Activated CD4-positive, alpha-beta memory T cell treated with anti-CD3 and anti-CD28 coated beads for 36 hours (primary cell): ENCODE measurements at regions of chr2 and their contacts with region 1.

Region 1: DNA sequence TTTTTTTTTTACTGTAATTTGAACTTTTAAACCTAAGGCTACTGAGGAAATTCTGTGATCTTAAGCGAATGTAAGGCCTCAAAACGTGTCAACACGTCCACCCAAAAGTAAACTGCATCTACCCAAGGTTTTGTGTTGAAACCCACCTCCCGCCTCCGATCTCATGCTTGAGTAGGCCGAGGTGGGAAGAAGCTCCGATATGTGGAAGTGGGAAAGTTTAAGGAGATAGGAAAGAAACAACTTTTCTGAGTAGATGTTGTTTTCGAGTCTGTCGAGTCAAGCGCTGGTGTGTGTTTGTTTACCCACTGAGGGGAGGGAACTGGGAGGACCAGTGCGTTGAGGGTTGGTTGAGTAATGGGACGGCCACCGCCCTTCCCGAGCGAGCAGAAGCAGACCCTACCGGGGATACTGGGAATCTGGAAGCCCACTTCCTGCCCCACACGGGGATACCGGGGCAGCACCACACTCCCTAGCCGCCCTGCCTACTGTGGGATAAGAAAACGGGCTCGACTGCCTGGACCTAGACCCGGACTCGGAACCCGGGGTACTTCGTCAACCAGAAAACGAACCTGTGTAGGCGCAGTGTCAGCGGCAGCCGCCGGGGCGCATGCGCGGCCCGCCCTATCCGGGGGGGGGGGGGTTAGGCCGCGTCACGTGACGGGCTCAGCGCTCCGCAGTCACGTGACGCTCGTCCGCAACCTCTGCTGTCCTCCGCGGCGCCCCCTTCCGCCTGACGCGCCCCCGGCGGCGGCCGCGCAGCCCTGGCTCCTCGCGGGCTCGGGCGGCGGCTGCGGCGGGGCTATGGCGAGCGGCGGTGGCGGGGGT is at the start of gene RETREG2:
- DNase-seq: peak; percentile 86
- H3K4me3 Mint-ChIP-seq: peak within 1 kb of the TSS; percentile 95
- H3K27ac Mint-ChIP-seq: peak within 1 kb of the TSS; percentile 99
- H3K4me1 Mint-ChIP-seq: peaks cover 52% of the 10 kb centered on the region
- H3K27me3 Mint-ChIP-seq: no peaks in the 10 kb centered on the region
- total RNA-seq, gene RETREG2: 60.3 to 67.9 TPM

Region 2: GRCh38 chr2:218286570-218287459 is 890.9 kb before region 1 on chr2:
- CTCF ChIA-PET with region 1: no interaction called
- POLR2A ChIA-PET with region 1: no interaction called
- intact Hi-C with region 1: loop called (anchors 10 kb)
- DNase-seq: peak; percentile 92
- H3K4me3 Mint-ChIP-seq: peak overlapping the region; percentile 82
- H3K27ac Mint-ChIP-seq: peak overlapping the region; percentile 98
- H3K4me1 Mint-ChIP-seq: peaks cover 81% of the 10 kb centered on the region
- H3K27me3 Mint-ChIP-seq: no peaks in the 10 kb centered on the region

Region 3: GRCh38 chr2:219206442-219207253 is 28.9 kb after region 1 on chr2 and contains the start of gene ZFAND2B:
- CTCF ChIA-PET with region 1: interaction called, 13 read pairs
- POLR2A ChIA-PET with region 1: interaction called, 26 read pairs
- intact Hi-C with region 1: loop called (anchors 1 kb)
- DNase-seq: peak; percentile 95
- H3K4me3 Mint-ChIP-seq: peak within 1 kb of the TSS; percentile 94
- H3K27ac Mint-ChIP-seq: peak within 1 kb of the TSS; percentile 99
- H3K4me1 Mint-ChIP-seq: peaks cover 32% of the 10 kb centered on the region
- H3K27me3 Mint-ChIP-seq: no peaks in the 10 kb centered on the region
- total RNA-seq, gene ZFAND2B: 31.9 to 34.4 TPM

Region 4: DNA sequence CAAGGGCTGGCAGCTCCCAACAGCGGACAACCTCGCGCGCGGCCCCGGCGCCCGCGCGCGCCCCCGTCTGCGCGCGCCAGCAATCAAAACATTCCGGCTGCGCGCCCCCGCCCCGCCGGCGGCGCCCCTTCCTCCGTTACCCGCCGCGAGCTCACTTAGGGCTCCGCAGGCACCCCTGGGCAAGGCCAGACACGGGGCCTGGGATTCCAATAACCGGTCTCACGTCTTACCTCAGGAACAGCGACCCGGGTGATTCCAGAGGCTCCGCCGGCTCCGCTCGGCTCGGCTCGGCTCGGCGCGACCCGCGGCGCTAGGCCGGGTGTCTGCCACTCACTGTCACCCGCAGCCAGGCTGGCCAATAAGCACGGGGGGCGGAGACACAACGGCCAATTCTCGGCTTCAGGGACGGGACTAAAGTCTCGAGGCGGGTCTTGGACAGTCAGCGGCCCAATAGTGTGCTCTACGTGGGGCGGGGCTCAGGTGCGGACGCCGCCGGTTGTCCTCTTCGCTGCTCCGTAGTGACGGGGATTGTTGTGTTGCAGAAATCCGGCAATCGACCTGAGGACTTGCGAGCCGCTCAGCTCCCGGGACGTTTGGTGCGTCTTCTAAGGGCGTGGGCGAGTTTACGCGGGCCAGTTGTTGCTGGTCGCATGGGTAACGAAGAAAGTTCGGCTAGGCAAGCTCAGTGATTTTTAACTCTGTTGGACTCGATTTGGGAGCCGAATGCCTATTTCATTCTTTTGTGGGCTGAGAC is 51.7 kb after region 1 on chr2 and contains the starts of genes ANKZF1 and ATG9A:
- CTCF ChIA-PET with region 1: interaction called, 3 read pairs
- POLR2A ChIA-PET with region 1: interaction called, 13 read pairs
- intact Hi-C with region 1: loop called (anchors 1 kb)
- DNase-seq: peak; percentile 99
- H3K4me3 Mint-ChIP-seq: peak within 1 kb of the TSS; percentile 95
- H3K27ac Mint-ChIP-seq: peak within 1 kb of the TSS; percentile 99
- H3K4me1 Mint-ChIP-seq: peaks cover 50% of the 10 kb centered on the region
- H3K27me3 Mint-ChIP-seq: no peaks in the 10 kb centered on the region
- total RNA-seq, gene ANKZF1: 97.0 to 97.5 TPM
- total RNA-seq, gene ATG9A: 34.7 to 39.5 TPM

Region 5: DNA sequence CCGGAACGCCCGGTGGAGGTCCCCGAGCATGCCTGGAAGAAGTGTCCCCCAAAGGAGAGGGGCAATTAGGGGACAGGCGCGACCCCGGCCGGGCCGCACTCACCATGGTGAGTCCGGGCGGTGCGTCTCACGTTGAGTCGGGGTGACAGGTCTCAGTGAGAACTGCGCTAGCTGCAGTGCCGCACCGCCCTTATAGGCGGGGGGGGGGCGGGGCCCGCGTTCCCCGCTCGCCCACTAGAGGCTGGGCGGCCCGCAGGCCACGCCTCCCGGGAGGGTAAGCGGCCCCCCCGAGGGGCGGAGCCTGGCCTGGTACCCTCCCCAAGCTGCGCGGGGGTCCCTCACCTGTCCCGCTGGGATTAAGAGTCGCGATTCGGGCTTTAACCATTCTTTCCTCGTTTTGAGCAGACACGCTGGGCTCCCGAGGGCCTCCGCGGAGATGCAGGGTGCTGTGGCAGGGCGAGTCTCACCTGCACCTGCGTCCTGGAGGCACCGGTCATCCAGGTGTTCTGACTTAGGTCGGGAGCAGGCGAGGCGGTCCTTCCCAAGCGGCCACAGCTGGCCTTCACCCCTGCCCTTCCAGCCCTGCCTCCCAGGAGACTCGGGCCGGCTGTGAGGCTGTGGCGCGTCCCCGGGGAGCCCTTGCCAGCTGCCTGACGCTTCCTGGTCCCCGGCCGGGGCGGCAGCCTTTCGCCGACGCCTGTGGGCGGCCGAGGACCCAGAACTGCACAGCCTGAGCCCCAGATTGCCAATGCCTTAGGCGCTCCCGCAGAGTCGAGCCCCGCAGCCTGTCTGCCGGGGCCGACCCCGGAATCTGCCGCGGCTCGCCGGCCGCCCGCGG is 76.2 kb after region 1 on chr2 and contains the start of gene TUBA4A:
- CTCF ChIA-PET with region 1: interaction called, 4 read pairs
- POLR2A ChIA-PET with region 1: interaction called, 8 read pairs
- intact Hi-C with region 1: loop called (anchors 1 kb)
- DNase-seq: peak; percentile 92
- H3K4me3 Mint-ChIP-seq: peak within 1 kb of the TSS; percentile 86
- H3K27ac Mint-ChIP-seq: peak within 1 kb of the TSS; percentile 97
- H3K4me1 Mint-ChIP-seq: peaks cover 49% of the 10 kb centered on the region
- H3K27me3 Mint-ChIP-seq: no peaks in the 10 kb centered on the region
- total RNA-seq, gene TUBA4A: 219 to 229 TPM

Region 6: DNA sequence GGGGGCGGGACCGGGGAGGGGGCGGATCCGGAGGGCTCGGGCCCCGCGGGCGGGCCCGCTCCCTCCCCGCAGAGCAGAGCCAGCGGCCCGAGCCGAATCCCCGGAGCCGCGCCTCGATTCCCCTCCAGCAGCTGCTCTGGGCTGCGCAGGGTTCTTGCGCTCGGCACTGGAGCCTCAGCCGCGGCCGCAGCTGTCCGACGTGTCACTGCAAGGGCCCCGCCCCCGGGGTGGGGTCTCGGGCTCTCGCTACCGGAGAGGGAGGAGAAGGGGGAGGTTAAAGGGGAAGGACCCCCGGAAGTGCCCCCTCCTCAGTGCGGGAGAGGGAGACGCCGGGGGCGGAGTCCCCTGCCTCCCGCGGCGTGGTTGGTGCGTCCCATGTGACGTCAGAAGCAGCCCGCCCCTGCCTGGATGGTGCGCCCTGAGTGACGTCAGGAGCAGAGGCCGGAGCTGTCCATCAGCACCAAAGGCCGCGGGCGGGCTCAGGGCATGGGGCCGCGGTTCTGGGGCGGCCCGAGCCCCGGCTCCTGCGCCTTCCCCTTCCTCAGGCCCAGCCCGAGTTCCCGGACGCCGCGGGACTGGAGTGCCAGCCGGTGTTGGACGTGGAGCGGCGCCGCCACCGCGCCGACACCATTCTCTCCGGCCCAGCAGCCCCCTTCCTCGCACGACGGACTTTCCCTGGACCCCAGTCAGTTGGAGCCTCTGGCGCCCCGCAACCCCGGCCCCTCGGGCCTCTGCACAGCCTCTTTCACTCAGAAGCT is 366.0 kb after region 1 on chr2 and contains the starts of genes CHPF and TMEM198:
- CTCF ChIA-PET with region 1: no interaction called
- POLR2A ChIA-PET with region 1: no interaction called
- intact Hi-C with region 1: loop called (anchors 10 kb)
- DNase-seq: peak; percentile 98
- H3K4me3 Mint-ChIP-seq: peak within 1 kb of the TSS; percentile 92
- H3K27ac Mint-ChIP-seq: peak within 1 kb of the TSS; percentile 65
- H3K4me1 Mint-ChIP-seq: peaks cover 22% of the 10 kb centered on the region
- H3K27me3 Mint-ChIP-seq: peaks cover 5% of the 10 kb centered on the region
- total RNA-seq, gene CHPF: 19.9 to 21.0 TPM
- total RNA-seq, gene TMEM198: 2.6 to 4.4 TPM